Activated naive CD4-positive, alpha-beta T cell treated with anti-CD3 and anti-CD28 coated beads for 36 hours (primary cell): ENCODE measurements at regions of chr7 and their contacts with region 1.

Region 1: DNA sequence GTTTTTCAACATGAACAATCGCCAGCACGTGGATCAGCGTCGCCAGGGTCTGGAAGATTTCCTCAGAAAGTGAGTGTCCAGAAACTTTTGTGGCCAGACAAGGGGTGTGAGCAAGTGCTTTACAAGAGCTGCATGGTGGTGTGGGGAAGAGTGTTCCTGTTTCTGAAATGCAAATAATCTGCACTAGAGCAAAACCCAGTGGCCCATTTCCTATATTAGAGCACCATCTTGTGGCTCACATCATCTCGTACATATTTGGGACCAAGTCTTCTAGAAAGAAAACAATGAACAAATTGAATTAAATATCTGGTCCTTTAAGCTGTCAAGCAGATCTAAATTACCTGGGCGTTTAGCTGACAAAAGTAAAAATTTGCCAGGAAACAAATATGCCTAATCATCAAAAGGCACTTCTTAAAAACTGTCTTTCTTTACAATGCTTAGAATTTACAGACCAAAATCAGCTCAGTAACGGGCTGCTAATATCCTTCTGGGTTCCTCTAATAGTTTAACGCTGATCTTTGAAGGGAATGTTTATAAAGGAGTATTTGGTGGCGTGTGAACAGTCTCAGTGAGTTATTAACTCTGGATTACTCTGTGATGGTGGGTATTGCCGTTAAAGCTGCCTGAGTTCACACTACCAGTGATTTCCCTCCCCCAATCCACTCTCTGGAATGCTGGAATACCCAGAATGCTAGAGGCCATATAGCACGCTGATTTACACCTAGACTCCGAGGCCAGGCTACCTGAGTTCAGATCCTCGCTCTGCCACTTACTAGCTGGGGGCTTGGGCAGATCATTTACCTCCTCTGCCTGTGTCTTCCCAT is 73.6 kb downstream of the SNX10 start:
- DNase-seq: peak; percentile 71
- H3K4me3 Mint-ChIP-seq: no peak overlapping the region
- H3K27ac Mint-ChIP-seq: no peak overlapping the region
- H3K4me1 Mint-ChIP-seq: peaks cover 9% of the 10 kb centered on the region
- H3K27me3 Mint-ChIP-seq: no peaks in the 10 kb centered on the region

Region 2: DNA sequence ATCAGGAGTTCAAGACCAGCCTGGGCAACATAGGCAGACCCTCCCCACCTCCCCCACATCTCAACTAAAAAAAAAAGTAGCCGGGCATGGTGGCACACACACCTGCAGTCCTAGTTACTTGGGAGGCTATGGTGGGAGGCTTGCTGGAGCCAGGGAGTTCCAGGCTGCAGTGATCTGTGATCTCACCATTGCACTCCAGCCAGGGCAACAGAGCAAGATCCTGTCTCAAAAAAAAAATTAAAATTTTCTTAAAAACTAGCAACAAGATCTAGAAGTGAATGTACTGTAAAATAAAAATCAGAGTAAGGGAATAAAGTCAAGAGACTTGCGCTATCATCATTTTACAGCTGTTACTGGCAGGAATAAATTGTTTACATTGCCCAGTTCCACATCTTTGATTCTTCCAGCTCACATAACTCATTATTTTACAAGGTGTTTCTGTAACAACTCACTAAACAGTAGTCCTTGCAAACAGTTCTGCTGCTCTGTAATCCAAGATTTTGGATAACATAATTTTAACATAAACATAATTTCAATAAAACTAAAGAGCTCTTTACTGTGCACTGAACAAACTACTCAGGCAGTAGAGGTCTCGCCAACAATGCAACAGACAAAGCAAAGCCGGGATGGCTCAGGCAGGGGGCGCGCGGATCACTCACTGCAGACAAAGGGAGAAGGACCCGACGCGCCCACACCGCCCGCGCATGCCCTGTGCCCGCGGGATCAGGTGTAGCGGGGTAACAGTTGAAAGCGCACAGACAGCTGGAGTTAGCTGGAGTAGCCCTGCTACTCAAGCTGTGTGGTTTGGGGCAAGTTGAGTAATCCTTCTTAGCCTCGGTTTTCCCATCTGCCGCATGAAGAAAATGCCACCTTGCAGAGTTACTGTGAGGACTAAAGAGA is 286.6 kb before region 1 on chr7:
- CTCF ChIA-PET with region 1: interaction called, 11 read pairs
- intact Hi-C with region 1: loop called (anchors 1 kb)
- DNase-seq: peak; percentile 89
- H3K4me3 Mint-ChIP-seq: no peak overlapping the region
- H3K27ac Mint-ChIP-seq: no peak overlapping the region
- H3K4me1 Mint-ChIP-seq: peaks cover 3% of the 10 kb centered on the region
- H3K27me3 Mint-ChIP-seq: peaks cover 17% of the 10 kb centered on the region

Region 3: DNA sequence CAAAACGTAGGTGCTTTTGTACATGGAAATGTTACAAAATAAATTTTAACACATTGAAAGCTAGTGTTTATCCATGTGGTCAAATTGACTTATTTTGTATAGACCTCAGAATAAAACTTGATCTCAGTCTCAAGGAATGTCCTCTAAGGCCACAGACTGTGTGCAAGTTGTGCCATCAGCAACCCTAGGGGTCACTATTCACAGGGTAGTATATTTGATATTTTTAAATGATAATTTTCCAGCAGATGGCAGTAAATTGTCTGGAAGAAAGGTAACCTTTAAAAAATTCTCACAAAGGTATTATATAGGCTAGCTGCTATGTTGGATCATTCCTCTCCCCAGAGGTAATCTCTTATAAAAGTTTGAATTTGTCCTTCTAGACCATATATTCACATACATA is 86.5 kb before region 1 on chr7:
- CTCF ChIA-PET with region 1: interaction called, 8 read pairs
- intact Hi-C with region 1: loop called (anchors 1 kb)
- DNase-seq: no peak
- H3K4me3 Mint-ChIP-seq: no peak overlapping the region
- H3K27ac Mint-ChIP-seq: no peak overlapping the region
- H3K4me1 Mint-ChIP-seq: peaks cover 9% of the 10 kb centered on the region
- H3K27me3 Mint-ChIP-seq: no peaks in the 10 kb centered on the region

Region 4: DNA sequence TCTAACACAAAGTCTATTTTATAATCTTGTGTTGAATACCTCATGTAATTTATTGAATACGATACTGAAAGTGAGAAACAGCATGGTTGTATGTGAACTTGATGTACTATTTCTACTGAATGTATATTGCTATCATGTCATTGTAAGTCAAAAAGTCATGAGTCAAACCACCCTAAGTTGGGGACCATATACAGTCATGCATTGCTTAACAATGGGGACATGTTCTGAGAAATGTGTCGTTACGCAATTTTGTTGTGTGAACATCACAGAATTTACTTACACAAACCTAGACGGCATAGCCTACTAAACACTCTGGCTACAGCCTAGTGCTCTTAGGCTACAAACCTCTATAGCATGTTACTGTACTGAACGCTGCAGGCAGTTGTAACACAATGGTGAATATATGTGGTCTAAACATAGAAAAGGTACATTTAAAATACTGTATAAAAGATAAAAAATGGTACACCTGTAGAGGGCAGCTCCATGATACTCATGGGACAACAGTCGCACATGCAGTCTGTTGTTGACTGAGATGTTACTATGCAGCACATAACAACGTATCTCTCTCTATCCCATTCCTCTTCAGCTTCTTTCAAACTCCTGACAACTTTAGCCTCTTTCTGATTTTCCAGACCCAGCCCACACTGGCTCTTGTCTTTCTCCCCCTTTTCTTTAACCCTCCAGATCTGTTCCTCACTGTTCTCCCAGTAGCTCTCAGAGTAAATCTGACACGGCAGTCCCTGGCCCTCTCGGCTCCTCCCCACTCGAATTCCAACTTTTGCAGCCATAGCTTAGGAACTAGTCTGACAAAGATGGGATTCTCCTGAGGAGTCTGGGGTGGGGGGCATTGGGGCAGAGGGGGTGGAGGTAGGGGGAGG is 16.4 kb after region 1 on chr7:
- CTCF ChIA-PET with region 1: interaction called, 17 read pairs
- intact Hi-C with region 1: no loop called
- DNase-seq: no peak
- H3K4me3 Mint-ChIP-seq: no peak overlapping the region
- H3K27ac Mint-ChIP-seq: no peak overlapping the region
- H3K4me1 Mint-ChIP-seq: no peaks in the 10 kb centered on the region
- H3K27me3 Mint-ChIP-seq: peaks cover 34% of the 10 kb centered on the region

Region 5: GRCh38 chr7:26500749-26501352 is 135.6 kb after region 1 on chr7:
- CTCF ChIA-PET with region 1: interaction called, 11 read pairs
- intact Hi-C with region 1: loop called (anchors 1 kb)
- DNase-seq: no peak
- H3K4me3 Mint-ChIP-seq: no peak overlapping the region
- H3K27ac Mint-ChIP-seq: no peak overlapping the region
- H3K4me1 Mint-ChIP-seq: no peaks in the 10 kb centered on the region
- H3K27me3 Mint-ChIP-seq: peaks cover 3% of the 10 kb centered on the region

Region 6: GRCh38 chr7:26667500-26668133 is 302.3 kb after region 1 on chr7:
- CTCF ChIA-PET with region 1: interaction called, 25 read pairs
- intact Hi-C with region 1: loop called (anchors 1 kb)
- DNase-seq: peak; percentile 78
- H3K4me3 Mint-ChIP-seq: no peak overlapping the region
- H3K27ac Mint-ChIP-seq: no peak overlapping the region
- H3K4me1 Mint-ChIP-seq: peaks cover 19% of the 10 kb centered on the region
- H3K27me3 Mint-ChIP-seq: peaks cover 4% of the 10 kb centered on the region